ENCODE measurements at regions of chr3 and their contacts with region 1.

Region 1: DNA sequence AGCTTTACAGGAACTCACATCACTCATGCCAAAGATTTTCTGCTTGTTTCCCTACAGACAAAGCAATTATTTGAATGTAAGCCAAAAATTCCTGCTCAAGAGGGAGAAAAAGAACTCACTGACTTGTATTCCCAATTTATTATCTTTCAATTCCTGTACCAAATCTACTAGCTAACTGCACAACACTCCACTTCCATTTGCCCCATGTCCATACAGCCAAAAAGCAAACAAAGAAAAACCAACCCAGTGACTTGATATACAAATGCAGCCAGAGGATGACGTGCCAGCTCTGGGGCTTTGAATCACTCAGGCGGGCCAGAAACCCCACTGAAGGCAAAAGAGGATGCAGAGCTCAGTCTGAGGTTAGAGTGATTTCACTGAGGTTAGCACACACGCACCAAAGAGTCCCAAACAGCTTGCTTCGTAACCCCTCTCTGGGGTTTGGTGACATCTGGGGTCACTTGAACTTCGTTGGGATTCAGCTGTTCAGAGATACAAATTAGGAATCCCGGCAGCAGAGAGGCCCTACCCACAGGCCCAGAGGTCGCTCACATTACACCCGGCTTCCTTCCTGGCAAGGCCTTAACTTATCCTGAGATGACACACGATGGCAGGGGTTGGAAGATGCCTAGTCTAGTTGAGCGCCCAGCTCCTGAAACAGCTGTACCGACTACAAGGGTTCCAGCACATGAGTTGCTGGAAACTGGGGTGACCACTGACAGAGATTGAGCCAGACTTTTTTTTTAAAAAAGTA is 1.6 kb downstream of the RFTN1 start:
- DNase-seq: peak; percentile 92
- H3K4me3 Mint-ChIP-seq: peak overlapping the region; percentile 94
- H3K27ac Mint-ChIP-seq: peak overlapping the region; percentile 96
- H3K4me1 Mint-ChIP-seq: peaks cover 74% of the 10 kb centered on the region
- H3K27me3 Mint-ChIP-seq: no peaks in the 10 kb centered on the region

Region 2: GRCh38 chr3:16264708-16265454 is 247.0 kb before region 1 on chr3 and contains the starts of genes DPH3 and OXNAD1:
- CTCF ChIA-PET with region 1: interaction called, 5 read pairs
- POLR2A ChIA-PET with region 1: interaction called, 10 read pairs
- intact Hi-C with region 1: loop called (anchors 1 kb)
- DNase-seq: peak; percentile 99
- H3K4me3 Mint-ChIP-seq: peak within 1 kb of the TSS; percentile 93
- H3K27ac Mint-ChIP-seq: peak within 1 kb of the TSS; percentile 94
- H3K4me1 Mint-ChIP-seq: peaks cover 36% of the 10 kb centered on the region
- H3K27me3 Mint-ChIP-seq: no peaks in the 10 kb centered on the region
- total RNA-seq, gene DPH3: 23.4 TPM
- total RNA-seq, gene OXNAD1: 23.5 to 24.0 TPM

Region 3: GRCh38 chr3:16378920-16379319 is 132.9 kb before region 1 on chr3:
- CTCF ChIA-PET with region 1: no interaction called
- POLR2A ChIA-PET with region 1: interaction called, 5 read pairs
- intact Hi-C with region 1: loop called (anchors 2 kb)
- DNase-seq: peak; percentile 38
- H3K4me3 Mint-ChIP-seq: no peak overlapping the region
- H3K27ac Mint-ChIP-seq: peak overlapping the region; percentile 70
- H3K4me1 Mint-ChIP-seq: peaks cover 82% of the 10 kb centered on the region
- H3K27me3 Mint-ChIP-seq: no peaks in the 10 kb centered on the region

Region 4: DNA sequence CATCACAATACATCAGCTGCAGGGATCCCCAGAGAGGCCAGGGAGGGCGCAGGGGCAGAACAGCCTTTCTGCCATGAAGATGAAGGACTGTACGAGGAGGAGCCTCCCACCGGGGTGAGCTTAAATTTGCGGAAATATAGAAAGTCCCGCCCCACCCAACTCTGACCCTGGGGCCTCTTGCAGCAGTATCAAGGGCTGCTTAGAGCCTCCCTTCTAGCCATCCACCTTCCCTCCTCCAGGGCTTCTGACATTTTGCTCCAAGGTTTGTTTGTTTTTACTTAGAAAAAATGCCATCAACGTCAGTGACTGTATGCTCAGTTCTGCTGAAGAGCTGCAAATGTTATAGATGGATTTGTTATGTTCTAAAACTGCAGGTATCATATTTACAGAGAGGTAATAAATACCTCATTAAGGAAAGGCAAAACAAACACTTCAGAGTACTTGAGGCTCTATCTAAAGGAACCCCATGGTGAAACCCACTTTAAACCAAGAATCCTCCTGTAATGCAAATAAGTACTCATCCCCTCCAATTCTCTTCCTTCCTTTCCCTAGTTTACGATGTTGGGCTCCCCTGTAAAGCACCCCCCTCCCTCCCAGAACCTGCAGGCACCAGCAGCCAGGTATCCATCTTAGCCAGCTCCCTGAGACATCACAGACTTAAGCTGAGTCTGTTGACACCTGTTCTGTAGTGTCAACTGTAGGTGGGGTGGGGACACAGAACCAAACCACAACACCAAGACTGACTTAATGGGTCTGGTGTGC is 28.9 kb before region 1 on chr3:
- CTCF ChIA-PET with region 1: interaction called, 3 read pairs
- POLR2A ChIA-PET with region 1: interaction called, 11 read pairs
- intact Hi-C with region 1: loop called (anchors 1 kb)
- DNase-seq: peak; percentile 50
- H3K4me3 Mint-ChIP-seq: peak overlapping the region; percentile 35
- H3K27ac Mint-ChIP-seq: peak overlapping the region; percentile 76
- H3K4me1 Mint-ChIP-seq: peaks cover 72% of the 10 kb centered on the region
- H3K27me3 Mint-ChIP-seq: no peaks in the 10 kb centered on the region

Region 5: DNA sequence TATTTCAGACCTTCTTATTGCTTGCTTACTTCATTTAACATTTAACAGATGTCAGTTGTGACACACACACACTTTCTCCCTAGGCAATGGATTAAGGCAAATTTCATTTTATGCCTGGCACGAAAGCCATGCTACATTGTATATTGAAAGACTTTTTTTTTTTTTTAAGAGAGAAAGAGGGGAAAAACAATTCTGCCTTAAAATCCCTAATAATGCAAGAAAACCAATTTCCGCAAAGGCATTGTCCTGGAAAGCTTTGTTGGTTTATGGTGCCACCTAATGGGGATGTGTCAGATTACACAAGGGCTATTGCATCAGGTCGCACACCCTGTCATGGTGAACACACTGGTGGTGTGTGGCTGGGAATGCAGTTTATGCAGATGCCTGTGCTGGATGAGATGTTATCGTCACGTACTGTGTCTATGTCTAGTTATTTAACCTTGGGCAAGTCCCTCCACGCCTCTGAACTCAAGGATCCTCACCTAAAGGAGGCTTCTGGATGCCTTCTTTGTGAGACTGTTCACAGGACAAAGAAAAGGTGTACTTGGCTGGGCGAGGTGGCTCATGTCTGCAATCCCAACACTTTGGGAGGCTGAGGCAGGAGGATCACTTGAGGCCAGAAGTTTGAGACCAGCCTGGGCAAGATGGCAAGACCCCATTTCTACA is 39.0 kb after region 1 on chr3:
- CTCF ChIA-PET with region 1: interaction called, 6 read pairs
- POLR2A ChIA-PET with region 1: interaction called, 4 read pairs
- intact Hi-C with region 1: loop called (anchors 2 kb)
- DNase-seq: peak; percentile 82
- H3K4me3 Mint-ChIP-seq: peak overlapping the region; percentile 3
- H3K27ac Mint-ChIP-seq: peak overlapping the region; percentile 59
- H3K4me1 Mint-ChIP-seq: peaks cover 3% of the 10 kb centered on the region
- H3K27me3 Mint-ChIP-seq: peaks cover 5% of the 10 kb centered on the region